CD14-positive monocyte (primary cell): ENCODE measurements at regions of chr19 and their contacts with region 1.

Region 1: DNA sequence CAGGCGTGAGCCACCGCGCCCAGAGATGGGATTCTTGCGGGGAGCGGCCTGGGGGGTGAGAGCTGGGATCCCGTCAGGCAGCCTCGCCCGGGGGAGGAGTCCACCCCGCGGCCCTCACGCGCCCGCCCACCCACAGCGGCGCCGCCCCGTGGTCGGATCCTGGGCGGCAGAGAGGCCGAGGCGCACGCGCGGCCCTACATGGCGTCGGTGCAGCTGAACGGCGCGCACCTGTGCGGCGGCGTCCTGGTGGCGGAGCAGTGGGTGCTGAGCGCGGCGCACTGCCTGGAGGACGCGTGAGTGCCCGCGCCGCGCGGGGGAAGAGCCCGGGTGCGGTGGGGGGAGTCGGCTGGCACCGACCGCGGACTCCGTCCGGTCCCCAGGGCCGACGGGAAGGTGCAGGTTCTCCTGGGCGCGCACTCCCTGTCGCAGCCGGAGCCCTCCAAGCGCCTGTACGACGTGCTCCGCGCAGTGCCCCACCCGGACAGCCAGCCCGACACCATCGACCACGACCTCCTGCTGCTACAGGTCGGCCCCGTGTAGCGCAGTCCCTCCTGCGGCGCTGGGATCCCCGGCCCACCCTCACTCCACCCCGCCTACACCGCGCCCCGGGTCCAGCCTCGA is 1.1 kb downstream of the CFD start:
- DNase-seq: peak; percentile 47 to 62 (median 60)
- H3K4me3 ChIP-seq: peak overlapping the region; percentile 44 to 87 (median 52)
- H3K4me3 Mint-ChIP-seq: peak overlapping the region; percentile 77 to 82
- H3K27ac ChIP-seq: no peak overlapping the region
- H3K27ac Mint-ChIP-seq: no peak overlapping the region
- H3K4me1 ChIP-seq: peaks cover 53 to 73% of the 10 kb centered on the region in 2 donors
- H3K4me1 Mint-ChIP-seq: peaks cover 36% of the 10 kb centered on the region
- H3K27me3 ChIP-seq: peaks cover 0 to under 1% of the 10 kb centered on the region in 2 donors
- H3K27me3 Mint-ChIP-seq: peaks cover 0 to 5% (median 0%) of the 10 kb centered on the region in 3 donors
- CTCF ChIP-seq: peak; percentile 20

Region 2: GRCh38 chr19:872266-872951 is 11.8 kb after region 1 on chr19:
- intact Hi-C with region 1: loop called in 1 of 2 experiments (anchors 1 kb)
- DNase-seq: peak; percentile 66 to 73 (median 71)
- H3K4me3 ChIP-seq: peak overlapping the region in 1 of 3 experiments; percentile 49
- H3K4me3 Mint-ChIP-seq: peak overlapping the region; percentile 9 to 69
- H3K27ac ChIP-seq: peak overlapping the region in 1 of 2 donors; percentile 47
- H3K27ac Mint-ChIP-seq: peak overlapping the region in 5 of 7 donors; percentile 51 to 89 (median 59)
- H3K4me1 ChIP-seq: peaks cover 8 to 10% of the 10 kb centered on the region in 2 donors
- H3K4me1 Mint-ChIP-seq: peaks cover 5% of the 10 kb centered on the region
- H3K27me3 ChIP-seq: no peaks in the 10 kb centered on the region
- H3K27me3 Mint-ChIP-seq: peaks cover 0 to 3% (median 2%) of the 10 kb centered on the region in 3 donors
- CTCF ChIP-seq: no peak

Region 3: GRCh38 chr19:913080-913748 is 52.6 kb after region 1 on chr19 and contains the start of gene R3HDM4:
- intact Hi-C with region 1: loop called in 1 of 2 experiments (anchors 2 kb)
- DNase-seq: peak; percentile 49 to 71 (median 66)
- H3K4me3 ChIP-seq: peak within 1 kb of the TSS; percentile 86 to 93 (median 89)
- H3K4me3 Mint-ChIP-seq: peak within 1 kb of the TSS; percentile 83
- H3K27ac ChIP-seq: peak within 1 kb of the TSS; percentile 84 to 90
- H3K27ac Mint-ChIP-seq: peak within 1 kb of the TSS; percentile 75 to 94 (median 86)
- H3K4me1 ChIP-seq: peaks cover 48 to 70% of the 10 kb centered on the region in 2 donors
- H3K4me1 Mint-ChIP-seq: peaks cover 37% of the 10 kb centered on the region
- H3K27me3 ChIP-seq: peaks cover 14 to 18% of the 10 kb centered on the region in 2 donors
- H3K27me3 Mint-ChIP-seq: peaks cover 17 to 23% (median 19%) of the 10 kb centered on the region in 3 donors
- CTCF ChIP-seq: no peak
- polyA plus RNA-seq, gene R3HDM4: 70.8 to 99.9 (median 78.7) TPM

Region 4: GRCh38 chr19:920051-920864 is 59.7 kb after region 1 on chr19:
- intact Hi-C with region 1: loop called (anchors 2 kb)
- DNase-seq: peak in 2 of 3 donors; percentile 28 to 38
- H3K4me3 ChIP-seq: peak overlapping the region in 1 of 3 experiments; percentile 55
- H3K4me3 Mint-ChIP-seq: peak overlapping the region; percentile 39 to 86
- H3K27ac ChIP-seq: no peak overlapping the region
- H3K27ac Mint-ChIP-seq: no peak overlapping the region
- H3K4me1 ChIP-seq: peaks cover 48 to 61% of the 10 kb centered on the region in 2 donors
- H3K4me1 Mint-ChIP-seq: peaks cover 30% of the 10 kb centered on the region
- H3K27me3 ChIP-seq: peaks cover 23 to 47% of the 10 kb centered on the region in 2 donors
- H3K27me3 Mint-ChIP-seq: peaks cover 45 to 62% (median 56%) of the 10 kb centered on the region in 3 donors
- CTCF ChIP-seq: no peak

Region 5: DNA sequence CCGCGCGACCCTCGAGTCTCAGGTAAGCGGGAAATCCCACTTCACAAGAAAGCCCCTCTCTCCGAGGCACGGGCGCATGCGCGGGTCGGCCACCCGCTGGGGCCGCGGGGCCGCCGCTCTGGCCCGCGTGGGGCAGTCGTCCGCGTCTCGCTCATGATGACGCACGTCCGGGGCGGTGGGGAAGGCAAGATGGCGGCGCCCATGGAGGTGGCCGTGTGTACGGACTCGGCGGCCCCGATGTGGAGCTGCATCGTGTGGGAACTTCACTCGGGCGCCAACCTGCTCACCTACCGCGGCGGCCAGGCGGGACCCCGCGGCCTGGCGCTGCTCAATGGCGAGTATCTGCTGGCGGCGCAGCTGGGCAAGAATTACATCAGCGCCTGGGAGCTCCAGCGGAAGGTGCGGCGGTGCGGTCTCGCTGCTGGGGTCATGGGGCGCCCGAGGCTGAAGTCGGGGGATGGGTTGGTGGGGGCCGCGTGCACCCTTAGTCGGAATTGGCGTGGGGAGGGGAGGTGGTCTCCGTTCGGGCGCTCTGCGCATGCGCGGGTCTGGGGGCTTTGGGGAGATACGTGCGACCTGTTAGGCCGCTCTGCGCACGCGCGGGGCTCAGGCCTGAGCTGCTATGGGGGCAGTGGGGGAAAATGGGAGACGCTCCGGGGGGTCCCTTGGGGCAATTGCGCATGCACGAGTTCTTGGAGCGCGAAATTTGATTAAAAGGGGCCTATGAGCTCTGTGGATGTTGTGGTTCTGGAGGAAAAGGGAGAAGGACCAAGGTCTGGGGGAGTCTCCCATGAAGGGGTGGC is 123.8 kb after region 1 on chr19 and contains the start of gene WDR18:
- intact Hi-C with region 1: loop called (anchors 2 to 5 kb)
- DNase-seq: peak; percentile 84 to 90 (median 86)
- H3K4me3 ChIP-seq: peak within 1 kb of the TSS; percentile 82 to 96 (median 85)
- H3K4me3 Mint-ChIP-seq: peak within 1 kb of the TSS; percentile 88 to 90
- H3K27ac ChIP-seq: peak within 1 kb of the TSS; percentile 7 to 71
- H3K27ac Mint-ChIP-seq: peak within 1 kb of the TSS; percentile 59 to 91 (median 77)
- H3K4me1 ChIP-seq: peaks cover 18 to 28% of the 10 kb centered on the region in 2 donors
- H3K4me1 Mint-ChIP-seq: peaks cover 17% of the 10 kb centered on the region
- H3K27me3 ChIP-seq: no peaks in the 10 kb centered on the region
- H3K27me3 Mint-ChIP-seq: peaks cover 0 to 4% (median 1%) of the 10 kb centered on the region in 3 donors
- CTCF ChIP-seq: no peak
- polyA plus RNA-seq, gene WDR18: 21.3 to 52.7 (median 49.9) TPM

Region 6: DNA sequence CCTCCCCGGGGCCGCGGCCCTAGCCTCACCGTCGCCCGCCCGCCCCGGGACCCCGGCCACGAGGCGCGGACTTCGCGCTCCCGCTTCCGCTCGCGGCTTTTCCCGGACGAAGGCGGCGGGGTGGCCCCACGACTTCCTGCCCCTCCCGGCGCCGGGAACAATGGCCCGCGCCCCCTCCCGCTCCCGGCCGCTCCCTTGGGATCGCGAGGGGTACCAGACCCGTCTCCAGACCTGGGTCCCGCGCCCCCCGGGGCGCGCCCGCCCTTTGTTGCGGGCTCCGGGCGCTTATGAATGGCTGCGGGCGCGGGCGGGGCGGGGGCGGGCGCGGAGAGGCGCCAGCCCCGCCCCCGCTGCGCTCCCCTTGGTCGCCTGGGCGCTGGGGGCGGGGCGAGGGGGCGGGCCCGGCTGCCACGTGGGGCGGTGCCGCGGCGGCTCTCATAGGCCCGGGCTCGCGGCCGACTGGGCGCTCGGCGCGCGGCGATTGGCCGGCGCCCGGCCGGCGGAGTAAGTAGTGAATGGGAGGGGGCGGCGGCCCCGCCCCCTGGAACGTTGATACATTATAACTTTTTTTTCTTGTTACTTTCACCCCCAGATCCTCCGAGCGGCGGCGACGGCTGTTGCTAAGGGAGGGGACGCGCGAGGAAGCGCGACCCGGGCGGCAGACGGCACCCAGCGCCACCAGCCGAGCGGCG is 388.9 kb after region 1 on chr19:
- intact Hi-C with region 1: loop called in 1 of 2 experiments (anchors 10 kb)
- DNase-seq: peak; percentile 93 to 97 (median 95)
- H3K4me3 ChIP-seq: peak overlapping the region; percentile 77 to 99 (median 83)
- H3K4me3 Mint-ChIP-seq: peak overlapping the region; percentile 84
- H3K27ac ChIP-seq: peak overlapping the region; percentile 64 to 95
- H3K27ac Mint-ChIP-seq: peak overlapping the region in 6 of 7 donors; percentile 46 to 87 (median 75)
- H3K4me1 ChIP-seq: peaks cover 38 to 46% of the 10 kb centered on the region in 2 donors
- H3K4me1 Mint-ChIP-seq: peaks cover 24% of the 10 kb centered on the region
- H3K27me3 ChIP-seq: no peaks in the 10 kb centered on the region
- H3K27me3 Mint-ChIP-seq: peaks cover 0 to 6% (median 0%) of the 10 kb centered on the region in 3 donors
- CTCF ChIP-seq: no peak